Activated B cell treated with CpG ODN at 0.5 μM for 24 hours (primary cell): ENCODE measurements at regions of chr18 and their contacts with region 1.

Region 1: DNA sequence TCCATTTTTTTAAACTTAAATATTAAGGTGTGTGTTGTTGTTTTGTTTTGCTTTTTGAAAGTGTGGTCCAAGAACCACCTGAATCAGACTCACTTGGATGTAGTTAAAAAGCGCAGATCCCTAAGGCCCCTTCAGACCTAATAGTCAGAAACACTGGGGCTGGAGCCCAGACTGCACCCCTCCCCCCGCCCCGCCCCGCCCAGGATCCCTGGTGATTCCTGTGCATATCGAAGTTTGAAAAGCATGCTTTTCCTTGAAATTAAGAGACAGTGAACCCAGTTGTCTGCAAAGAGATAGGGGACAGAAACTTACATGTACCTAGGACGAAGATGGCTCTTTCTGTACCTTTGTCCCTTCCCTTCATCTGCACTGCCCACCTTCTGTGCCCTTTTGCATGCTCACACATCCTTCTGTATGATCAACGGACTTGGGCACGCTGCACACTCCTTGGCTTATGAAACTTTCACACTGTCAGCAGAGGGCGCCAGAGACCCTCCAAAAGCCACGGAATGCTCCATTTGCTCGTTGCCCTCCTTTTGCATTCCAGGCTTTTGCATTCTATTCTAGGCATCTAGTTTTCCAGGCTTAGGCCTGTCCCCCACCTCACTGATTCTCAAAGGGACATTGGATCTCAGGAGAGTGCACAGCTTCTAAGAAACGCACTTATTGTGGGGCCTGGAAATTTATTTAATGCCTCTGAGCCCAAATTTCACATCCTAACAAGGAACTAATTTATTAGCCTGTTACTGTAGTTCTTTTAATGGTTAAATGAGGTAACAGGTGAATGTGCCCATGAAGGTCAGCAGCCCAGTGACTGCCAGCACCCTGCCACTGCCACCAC is 32.8 kb upstream of the SLC14A1 start:
- DNase-seq: peak; percentile 41
- ATAC-seq: no peak
- H3K4me3 Mint-ChIP-seq: no peak overlapping the region
- H3K27ac Mint-ChIP-seq: no peak overlapping the region
- H3K4me1 Mint-ChIP-seq: peaks cover 38% of the 10 kb centered on the region
- H3K27me3 Mint-ChIP-seq: peaks cover 3% of the 10 kb centered on the region
- CTCF ChIP-seq: peak; percentile 52

Region 2: GRCh38 chr18:45059695-45060094 is 631.5 kb before region 1 on chr18:
- CTCF ChIA-PET with region 1: no interaction called
- POLR2A ChIA-PET with region 1: no interaction called
- intact Hi-C with region 1: no loop called
- DNase-seq: no peak
- ATAC-seq: peak; percentile 61
- H3K4me3 Mint-ChIP-seq: no peak overlapping the region
- H3K27ac Mint-ChIP-seq: peak overlapping the region; percentile 10
- H3K4me1 Mint-ChIP-seq: peaks cover 3% of the 10 kb centered on the region
- H3K27me3 Mint-ChIP-seq: no peaks in the 10 kb centered on the region
- CTCF ChIP-seq: no peak

Region 3: GRCh38 chr18:45402485-45403056 is 288.6 kb before region 1 on chr18:
- CTCF ChIA-PET with region 1: no interaction called
- POLR2A ChIA-PET with region 1: no interaction called
- intact Hi-C with region 1: no loop called
- DNase-seq: no peak
- ATAC-seq: no peak
- H3K4me3 Mint-ChIP-seq: no peak overlapping the region
- H3K27ac Mint-ChIP-seq: no peak overlapping the region
- H3K4me1 Mint-ChIP-seq: no peaks in the 10 kb centered on the region
- H3K27me3 Mint-ChIP-seq: peaks cover 8% of the 10 kb centered on the region
- CTCF ChIP-seq: no peak

Region 4: GRCh38 chr18:45664824-45665763 is 26.1 kb before region 1 on chr18:
- CTCF ChIA-PET with region 1: interaction called, 64 read pairs
- POLR2A ChIA-PET with region 1: interaction called, 63 read pairs
- intact Hi-C with region 1: loop called (anchors 1 kb)
- DNase-seq: no peak
- ATAC-seq: peak; percentile 80
- H3K4me3 Mint-ChIP-seq: no peak overlapping the region
- H3K27ac Mint-ChIP-seq: peak overlapping the region; percentile 25
- H3K4me1 Mint-ChIP-seq: peaks cover 33% of the 10 kb centered on the region
- H3K27me3 Mint-ChIP-seq: no peaks in the 10 kb centered on the region
- CTCF ChIP-seq: no peak

Region 5: GRCh38 chr18:45722899-45723298 is 31.7 kb after region 1 on chr18:
- CTCF ChIA-PET with region 1: interaction called, 5 read pairs
- POLR2A ChIA-PET with region 1: no interaction called
- intact Hi-C with region 1: loop called (anchors 2 kb)
- DNase-seq: peak; percentile 50
- ATAC-seq: peak; percentile 80
- H3K4me3 Mint-ChIP-seq: no peak overlapping the region
- H3K27ac Mint-ChIP-seq: no peak overlapping the region
- H3K4me1 Mint-ChIP-seq: no peaks in the 10 kb centered on the region
- H3K27me3 Mint-ChIP-seq: peaks cover 8% of the 10 kb centered on the region
- CTCF ChIP-seq: no peak

Region 6: GRCh38 chr18:45874491-45875184 is 183.4 kb after region 1 on chr18:
- CTCF ChIA-PET with region 1: interaction called, 86 read pairs
- POLR2A ChIA-PET with region 1: interaction called, 8 read pairs
- intact Hi-C with region 1: loop called (anchors 1 kb)
- DNase-seq: peak; percentile 22
- ATAC-seq: peak; percentile 93
- H3K4me3 Mint-ChIP-seq: peak overlapping the region; percentile 49
- H3K27ac Mint-ChIP-seq: peak overlapping the region; percentile 94
- H3K4me1 Mint-ChIP-seq: peaks cover 18% of the 10 kb centered on the region
- H3K27me3 Mint-ChIP-seq: no peaks in the 10 kb centered on the region
- CTCF ChIP-seq: no peak

Region 7: GRCh38 chr18:45910405-45911023 is 219.3 kb after region 1 on chr18:
- CTCF ChIA-PET with region 1: no interaction called
- POLR2A ChIA-PET with region 1: no interaction called
- intact Hi-C with region 1: loop called (anchors 1 kb)
- DNase-seq: peak; percentile 23
- ATAC-seq: peak; percentile 72
- H3K4me3 Mint-ChIP-seq: no peak overlapping the region
- H3K27ac Mint-ChIP-seq: no peak overlapping the region
- H3K4me1 Mint-ChIP-seq: no peaks in the 10 kb centered on the region
- H3K27me3 Mint-ChIP-seq: no peaks in the 10 kb centered on the region
- CTCF ChIP-seq: peak; percentile 42

Region 8: DNA sequence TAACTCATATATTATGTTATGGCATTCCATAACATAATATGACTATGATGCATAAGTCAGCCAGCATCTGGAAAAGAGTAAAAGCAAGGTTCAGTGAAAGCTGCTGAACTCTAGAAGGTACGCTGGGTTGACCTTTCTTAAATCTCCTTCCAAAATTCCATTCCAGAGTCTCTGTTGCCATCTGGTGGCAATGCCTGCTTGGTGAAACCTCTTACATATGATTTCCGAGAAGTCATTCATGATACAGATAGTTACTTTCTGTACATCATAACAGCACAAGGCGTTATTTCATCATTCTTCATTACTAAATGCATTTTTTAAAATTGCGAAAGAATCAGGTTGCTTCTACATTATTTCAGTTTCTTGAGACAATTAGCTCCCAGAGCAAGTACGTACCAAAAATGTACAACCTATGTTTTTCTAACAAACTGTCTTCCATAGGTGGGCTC is 282.9 kb after region 1 on chr18:
- CTCF ChIA-PET with region 1: no interaction called
- POLR2A ChIA-PET with region 1: no interaction called
- intact Hi-C with region 1: loop called (anchors 1 kb)
- DNase-seq: no peak
- ATAC-seq: peak; percentile 54
- H3K4me3 Mint-ChIP-seq: no peak overlapping the region
- H3K27ac Mint-ChIP-seq: no peak overlapping the region
- H3K4me1 Mint-ChIP-seq: peaks cover 4% of the 10 kb centered on the region
- H3K27me3 Mint-ChIP-seq: no peaks in the 10 kb centered on the region
- CTCF ChIP-seq: no peak

Region 9: GRCh38 chr18:46104128-46104911 is 413.1 kb after region 1 on chr18 and contains the start of gene HAUS1:
- CTCF ChIA-PET with region 1: no interaction called
- POLR2A ChIA-PET with region 1: no interaction called
- intact Hi-C with region 1: loop called (anchors 1 kb)
- DNase-seq: peak; percentile 81
- ATAC-seq: peak; percentile 99
- H3K4me3 Mint-ChIP-seq: peak within 1 kb of the TSS; percentile 98
- H3K27ac Mint-ChIP-seq: peak within 1 kb of the TSS; percentile 82
- H3K4me1 Mint-ChIP-seq: peaks cover 19% of the 10 kb centered on the region
- H3K27me3 Mint-ChIP-seq: no peaks in the 10 kb centered on the region
- CTCF ChIP-seq: no peak
- total RNA-seq, gene HAUS1: 34.6 and 39.5 TPM in 2 replicates